ENCODE measurements at regions of chr9 and their contacts with region 1.

Region 1: GRCh38 chr9:36328798-36329411 is 70.7 kb upstream of the GNE start:
- DNase-seq: peak; percentile 28
- H3K4me3 Mint-ChIP-seq: no peak overlapping the region
- H3K27ac Mint-ChIP-seq: no peak overlapping the region
- H3K4me1 Mint-ChIP-seq: no peaks in the 10 kb centered on the region
- H3K27me3 Mint-ChIP-seq: no peaks in the 10 kb centered on the region

Region 2: DNA sequence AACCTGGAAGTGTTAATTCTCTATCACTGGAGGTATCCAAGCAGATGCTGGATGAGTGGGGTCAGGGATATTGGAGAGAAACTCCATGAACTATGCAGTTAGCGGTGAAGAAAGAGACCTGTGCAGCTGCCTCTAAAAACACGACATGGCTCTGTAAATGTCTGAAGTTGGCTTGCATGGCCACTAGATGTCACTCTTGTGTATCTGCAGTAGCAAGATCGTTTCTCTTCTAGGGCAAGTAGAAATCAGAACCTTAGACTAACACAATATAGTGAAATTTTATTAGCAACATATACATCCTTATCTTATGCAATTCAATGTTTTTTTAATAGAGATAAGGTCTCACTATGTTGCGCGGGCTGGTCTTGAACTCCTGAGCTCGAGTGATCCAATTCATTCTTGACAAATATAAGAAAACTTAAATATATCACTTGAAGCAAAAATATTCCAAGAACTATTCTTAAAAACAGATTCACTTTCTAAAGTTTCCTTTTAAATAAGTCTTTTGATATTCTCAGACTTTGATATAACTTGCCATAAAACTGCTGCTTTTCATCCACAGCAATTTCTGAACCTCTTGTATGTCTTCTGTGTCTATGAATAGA is 373.9 kb before region 1 on chr9:
- intact Hi-C with region 1: loop called (anchors 1 kb)
- DNase-seq: peak; percentile 25
- H3K4me3 Mint-ChIP-seq: no peak overlapping the region
- H3K27ac Mint-ChIP-seq: no peak overlapping the region
- H3K4me1 Mint-ChIP-seq: peaks cover 6% of the 10 kb centered on the region
- H3K27me3 Mint-ChIP-seq: peaks cover 30% of the 10 kb centered on the region

Region 3: GRCh38 chr9:36008774-36009300 is 320.1 kb before region 1 on chr9:
- intact Hi-C with region 1: loop called (anchors 2 kb)
- DNase-seq: peak; percentile 42
- H3K4me3 Mint-ChIP-seq: no peak overlapping the region
- H3K27ac Mint-ChIP-seq: no peak overlapping the region
- H3K4me1 Mint-ChIP-seq: peaks cover 14% of the 10 kb centered on the region
- H3K27me3 Mint-ChIP-seq: peaks cover 19% of the 10 kb centered on the region

Region 4: GRCh38 chr9:36102742-36103495 is 226.0 kb before region 1 on chr9:
- intact Hi-C with region 1: loop called (anchors 1 kb)
- DNase-seq: peak; percentile 75
- H3K4me3 Mint-ChIP-seq: no peak overlapping the region
- H3K27ac Mint-ChIP-seq: no peak overlapping the region
- H3K4me1 Mint-ChIP-seq: peaks cover 8% of the 10 kb centered on the region
- H3K27me3 Mint-ChIP-seq: peaks cover 2% of the 10 kb centered on the region

Region 5: DNA sequence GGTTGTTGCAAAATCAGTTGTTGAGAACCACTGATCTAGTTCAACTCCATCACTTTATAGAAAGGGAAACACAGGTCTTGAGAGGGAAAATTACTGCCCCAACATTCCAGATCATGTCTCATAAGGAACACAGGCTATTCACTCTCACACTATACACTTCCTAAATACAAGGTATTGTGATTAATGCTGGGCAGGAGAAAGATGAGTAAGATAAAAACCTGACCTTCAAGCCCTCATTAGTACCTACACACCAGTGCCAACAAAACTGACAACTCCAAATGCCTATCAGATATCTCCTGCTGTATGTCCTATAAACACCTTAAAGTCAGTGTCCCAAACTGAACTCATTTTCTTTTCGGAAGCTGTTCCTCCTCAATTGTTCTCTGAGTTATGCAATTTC is 78.8 kb before region 1 on chr9:
- intact Hi-C with region 1: loop called (anchors 1 kb)
- DNase-seq: no peak
- H3K4me3 Mint-ChIP-seq: no peak overlapping the region
- H3K27ac Mint-ChIP-seq: no peak overlapping the region
- H3K4me1 Mint-ChIP-seq: peaks cover 20% of the 10 kb centered on the region
- H3K27me3 Mint-ChIP-seq: no peaks in the 10 kb centered on the region